ENCODE measurements at regions of chr2 and their contacts with region 1.

Region 1: DNA sequence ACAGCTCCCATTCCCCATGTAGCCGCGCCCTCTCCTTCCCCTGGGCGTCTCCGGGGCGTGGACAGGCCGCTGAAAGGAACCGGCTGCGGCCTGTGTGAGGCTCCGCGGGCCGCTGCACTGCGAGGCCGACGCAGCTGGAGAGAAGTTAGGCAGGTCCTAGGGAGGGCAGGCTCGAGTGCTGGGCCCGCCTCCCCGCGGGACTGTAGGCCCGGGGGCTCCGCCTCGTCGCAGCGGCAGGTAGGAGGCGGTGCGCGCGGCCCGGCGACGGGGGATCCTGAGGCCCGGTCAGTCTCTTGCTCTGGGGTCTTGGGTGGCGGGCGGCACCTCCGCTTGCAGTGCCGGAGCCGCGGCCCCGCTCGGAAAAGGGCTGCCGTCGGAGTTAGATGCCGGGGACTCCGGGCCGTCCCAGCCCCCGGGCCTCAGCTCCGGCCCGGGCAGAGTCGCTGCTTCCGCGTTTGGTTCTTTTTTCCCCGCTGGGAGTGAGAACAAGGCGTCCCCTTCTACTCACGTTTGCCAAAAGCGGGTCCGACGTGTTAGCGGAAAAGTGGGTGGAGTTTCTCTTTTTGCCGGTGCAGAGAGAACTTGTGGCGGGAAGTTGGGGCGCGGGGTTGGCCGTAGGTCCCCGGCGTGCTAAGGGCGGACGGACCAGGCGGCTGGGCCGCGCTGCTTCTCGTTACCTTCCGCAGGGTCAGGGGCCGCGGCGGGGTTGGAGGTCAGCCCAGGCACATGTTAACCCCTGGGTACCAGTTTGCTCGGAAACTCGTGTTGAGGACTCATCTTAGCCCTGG is at the start of gene VRK2:
- DNase-seq: peak; percentile 95 to 96
- H3K4me3 ChIP-seq: peak within 1 kb of the TSS; percentile 66
- H3K4me3 Mint-ChIP-seq: peak within 1 kb of the TSS; percentile 86
- H3K27ac Mint-ChIP-seq: peak within 1 kb of the TSS; percentile 65
- H3K4me1 ChIP-seq: peaks cover 30% of the 10 kb centered on the region
- H3K4me1 Mint-ChIP-seq: peaks cover 26% of the 10 kb centered on the region
- H3K27me3 ChIP-seq: no peaks in the 10 kb centered on the region
- H3K27me3 Mint-ChIP-seq: no peaks in the 10 kb centered on the region
- CTCF ChIP-seq: peak in 1 of 2 experiments; percentile 16
- total RNA-seq, gene VRK2: 33.1 and 35.4 TPM in 2 replicates

Region 2: DNA sequence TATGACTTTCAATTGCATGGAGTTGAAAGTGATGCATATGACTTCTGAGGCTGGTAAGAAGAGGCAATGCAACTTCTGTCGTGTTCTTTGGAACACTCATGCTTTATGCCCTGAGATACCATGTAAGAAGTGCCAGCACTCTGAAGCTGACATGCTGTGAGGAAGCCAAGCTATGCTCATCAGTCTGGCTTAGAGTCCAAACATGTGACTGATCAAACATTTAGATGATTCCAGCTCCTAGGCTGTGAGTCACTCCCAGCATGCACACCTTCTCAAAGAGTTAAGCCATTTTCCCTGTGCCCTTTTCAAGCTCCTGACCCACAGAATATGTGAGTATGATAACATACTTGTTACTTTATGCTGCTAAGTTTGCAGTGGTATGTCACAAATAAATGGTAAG is 16.0 kb before region 1 on chr2:
- CTCF ChIA-PET with region 1: no interaction called
- POLR2A ChIA-PET with region 1: no interaction called
- intact Hi-C with region 1: no loop called
- DNase-seq: no peak
- H3K4me3 ChIP-seq: no peak overlapping the region
- H3K4me3 Mint-ChIP-seq: no peak overlapping the region
- H3K27ac Mint-ChIP-seq: no peak overlapping the region
- H3K4me1 ChIP-seq: no peaks in the 10 kb centered on the region
- H3K4me1 Mint-ChIP-seq: no peaks in the 10 kb centered on the region
- H3K27me3 ChIP-seq: no peaks in the 10 kb centered on the region; the same call in 1 of the 2 replicates
- H3K27me3 Mint-ChIP-seq: no peaks in the 10 kb centered on the region
- CTCF ChIP-seq: no peak

Region 3: GRCh38 chr2:58240670-58241545 is 194.1 kb after region 1 on chr2 and contains the start of gene FANCL:
- CTCF ChIA-PET with region 1: no interaction called
- POLR2A ChIA-PET with region 1: no interaction called
- intact Hi-C with region 1: loop called (anchors 2 kb)
- DNase-seq: peak; percentile 95 to 96
- H3K4me3 ChIP-seq: peak within 1 kb of the TSS; percentile 79
- H3K4me3 Mint-ChIP-seq: peak within 1 kb of the TSS; percentile 99
- H3K27ac Mint-ChIP-seq: peak within 1 kb of the TSS; percentile 99
- H3K4me1 ChIP-seq: peaks cover 8% of the 10 kb centered on the region
- H3K4me1 Mint-ChIP-seq: no peaks in the 10 kb centered on the region
- H3K27me3 ChIP-seq: no peaks in the 10 kb centered on the region
- H3K27me3 Mint-ChIP-seq: peaks cover 7% of the 10 kb centered on the region
- CTCF ChIP-seq: no peak
- total RNA-seq, gene FANCL: 30.2 and 34.3 TPM in 2 replicates

Measured in Caco-2 (cell line).